Activated CD8-positive, alpha-beta T cell treated with anti-CD3 and anti-CD28 coated beads for 36 hours (primary cell): ENCODE measurements at regions of chr4 and their contacts with region 1.

Region 1: DNA sequence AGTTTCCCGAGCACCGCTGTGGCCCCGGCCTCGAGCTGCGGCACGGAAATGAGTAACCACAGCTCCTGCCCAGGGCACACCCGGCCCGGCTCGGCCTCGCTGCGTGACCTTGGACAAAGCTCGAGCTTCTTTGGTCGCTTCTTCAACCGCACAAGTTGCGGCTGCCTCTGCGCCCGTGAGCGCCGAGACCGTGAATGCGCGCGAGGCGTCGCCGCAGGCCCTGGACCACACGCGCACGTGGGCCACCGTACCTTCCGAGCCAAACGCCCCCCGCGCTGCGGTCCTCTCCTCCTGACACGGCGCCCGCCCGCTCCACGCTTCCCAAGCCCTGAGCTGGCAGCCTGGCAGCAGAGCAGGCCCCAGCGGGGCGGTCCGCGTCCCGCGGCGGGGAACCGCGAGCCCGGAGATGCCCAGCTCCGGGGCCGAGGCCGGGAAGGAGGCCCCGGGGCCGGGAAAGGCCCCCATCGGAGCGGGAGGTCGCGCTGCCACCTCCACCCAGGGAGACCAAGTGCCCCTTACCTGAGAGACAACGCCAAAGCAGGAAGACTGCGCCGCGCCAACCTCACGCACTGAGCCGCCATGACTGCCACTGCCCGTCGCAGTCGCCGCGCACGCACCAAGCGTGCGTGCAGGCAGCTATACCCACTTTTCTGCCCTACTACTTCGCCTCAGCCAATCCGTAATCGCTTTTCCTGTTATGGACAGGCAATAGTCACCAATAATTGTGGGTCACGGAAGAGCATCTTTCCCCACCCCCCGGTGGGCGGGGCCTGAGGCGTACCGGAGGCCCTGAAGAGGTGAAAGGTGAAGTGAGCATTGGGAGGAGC is at the start of gene GRPEL1:
- DNase-seq: peak; percentile 100
- ATAC-seq: peak; percentile 95
- H3K4me3 Mint-ChIP-seq: peak within 1 kb of the TSS; percentile 91
- H3K27ac Mint-ChIP-seq: peak within 1 kb of the TSS; percentile 92
- H3K4me1 Mint-ChIP-seq: peaks cover 42% of the 10 kb centered on the region
- H3K27me3 Mint-ChIP-seq: peaks cover 1% of the 10 kb centered on the region
- CTCF ChIP-seq: no peak
- total RNA-seq, gene GRPEL1: 82.4 to 84.5 TPM

Region 2: GRCh38 chr4:6716018-6716911 is 351.4 kb before region 1 on chr4 and contains the start of gene BLOC1S4:
- CTCF ChIA-PET with region 1: interaction called, 18 read pairs
- POLR2A ChIA-PET with region 1: interaction called, 10 read pairs
- intact Hi-C with region 1: loop called (anchors 5 kb)
- DNase-seq: peak; percentile 91
- ATAC-seq: peak; percentile 82
- H3K4me3 Mint-ChIP-seq: peak within 1 kb of the TSS; percentile 90
- H3K27ac Mint-ChIP-seq: peak within 1 kb of the TSS; percentile 92
- H3K4me1 Mint-ChIP-seq: peaks cover 31% of the 10 kb centered on the region
- H3K27me3 Mint-ChIP-seq: no peaks in the 10 kb centered on the region
- CTCF ChIP-seq: no peak
- total RNA-seq, gene BLOC1S4: 19.1 to 21.8 TPM

Region 3: GRCh38 chr4:6909073-6909965 is 158.3 kb before region 1 on chr4 and contains the start of gene TBC1D14:
- CTCF ChIA-PET with region 1: interaction called, 11 read pairs
- POLR2A ChIA-PET with region 1: interaction called, 4 read pairs
- intact Hi-C with region 1: no loop called
- DNase-seq: peak; percentile 88
- ATAC-seq: peak; percentile 89
- H3K4me3 Mint-ChIP-seq: peak within 1 kb of the TSS; percentile 93
- H3K27ac Mint-ChIP-seq: peak within 1 kb of the TSS; percentile 90
- H3K4me1 Mint-ChIP-seq: peaks cover 42% of the 10 kb centered on the region
- H3K27me3 Mint-ChIP-seq: no peaks in the 10 kb centered on the region
- CTCF ChIP-seq: no peak
- total RNA-seq, gene TBC1D14: 34.7 to 36.3 TPM

Region 4: GRCh38 chr4:6974138-6974848 is 93.4 kb before region 1 on chr4:
- CTCF ChIA-PET with region 1: interaction called, 33 read pairs
- POLR2A ChIA-PET with region 1: interaction called, 3 read pairs
- intact Hi-C with region 1: no loop called
- DNase-seq: peak; percentile 90
- ATAC-seq: peak; percentile 99
- H3K4me3 Mint-ChIP-seq: no peak overlapping the region
- H3K27ac Mint-ChIP-seq: no peak overlapping the region
- H3K4me1 Mint-ChIP-seq: peaks cover 9% of the 10 kb centered on the region
- H3K27me3 Mint-ChIP-seq: no peaks in the 10 kb centered on the region
- CTCF ChIP-seq: peak; percentile 94

Region 5: DNA sequence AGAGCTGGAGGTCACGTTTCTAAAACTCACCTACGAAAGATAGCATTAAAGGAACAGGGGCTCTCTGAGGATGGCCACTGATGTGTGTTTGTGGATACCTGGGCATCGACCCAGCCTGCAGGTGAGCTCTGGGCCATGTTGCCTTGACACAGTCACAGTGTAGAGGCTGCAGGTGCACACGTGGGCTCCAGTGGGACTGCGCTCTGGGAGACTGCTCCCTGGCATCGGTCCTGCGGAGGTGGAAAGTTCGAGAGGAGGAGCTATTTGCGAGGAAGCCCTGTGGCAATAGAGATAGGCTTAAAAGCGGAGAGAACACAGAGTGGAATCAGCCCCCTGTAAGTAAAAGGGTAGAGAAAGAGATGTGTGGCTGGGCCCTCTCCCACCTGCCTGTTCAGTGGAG is 36.8 kb before region 1 on chr4:
- CTCF ChIA-PET with region 1: no interaction called
- POLR2A ChIA-PET with region 1: no interaction called
- intact Hi-C with region 1: no loop called
- DNase-seq: no peak
- ATAC-seq: no peak
- H3K4me3 Mint-ChIP-seq: no peak overlapping the region
- H3K27ac Mint-ChIP-seq: no peak overlapping the region
- H3K4me1 Mint-ChIP-seq: peaks cover 5% of the 10 kb centered on the region
- H3K27me3 Mint-ChIP-seq: no peaks in the 10 kb centered on the region
- CTCF ChIP-seq: no peak

Region 6: DNA sequence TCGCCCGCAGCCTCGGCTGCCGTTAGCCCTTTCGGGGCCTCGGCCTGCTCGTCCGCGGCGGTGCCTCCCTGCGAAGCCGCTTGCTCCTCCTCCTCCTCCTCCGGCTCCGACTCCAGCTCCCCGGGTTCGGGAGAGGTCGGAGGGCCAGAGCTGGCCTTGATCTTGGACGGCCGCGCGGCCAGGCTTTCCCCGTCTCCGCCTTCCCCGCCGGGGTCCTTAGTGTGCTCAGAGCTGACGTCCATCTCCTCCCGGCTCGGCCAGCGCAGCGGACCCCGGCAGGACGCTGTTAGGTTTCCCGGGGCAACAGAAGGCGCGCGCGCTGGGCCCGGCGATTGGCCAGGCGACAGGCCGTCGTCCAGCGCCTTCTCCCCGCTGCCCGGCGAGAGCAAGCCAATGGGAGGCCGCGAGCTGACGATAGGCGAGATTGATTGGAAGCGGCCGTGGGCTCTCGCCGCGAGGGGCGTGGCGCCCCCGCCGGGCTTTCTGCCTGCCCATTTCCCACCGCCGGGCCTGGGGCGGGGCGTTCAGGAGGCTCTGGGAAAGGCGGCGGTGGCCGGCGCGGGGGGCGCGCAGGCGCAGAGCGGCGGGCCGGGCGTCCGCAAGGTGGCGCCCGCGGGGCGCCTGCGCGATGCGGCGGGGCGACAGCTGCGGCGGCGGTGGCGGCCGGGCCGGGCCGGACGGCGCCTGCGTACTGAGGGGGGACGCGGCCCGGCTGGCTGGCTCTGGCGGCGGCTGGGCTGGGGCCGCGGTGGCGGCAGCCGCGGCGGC is 24.8 kb before region 1 on chr4 and contains the start of gene TADA2B:
- CTCF ChIA-PET with region 1: interaction called, 92 read pairs
- POLR2A ChIA-PET with region 1: interaction called, 123 read pairs
- intact Hi-C with region 1: loop called (anchors 2 kb)
- DNase-seq: peak; percentile 92
- ATAC-seq: peak; percentile 91
- H3K4me3 Mint-ChIP-seq: peak within 1 kb of the TSS; percentile 87
- H3K27ac Mint-ChIP-seq: peak within 1 kb of the TSS; percentile 73
- H3K4me1 Mint-ChIP-seq: peaks cover 46% of the 10 kb centered on the region
- H3K27me3 Mint-ChIP-seq: no peaks in the 10 kb centered on the region
- CTCF ChIP-seq: peak; percentile 14
- total RNA-seq, gene TADA2B: 7.7 to 10.0 TPM

Region 7: DNA sequence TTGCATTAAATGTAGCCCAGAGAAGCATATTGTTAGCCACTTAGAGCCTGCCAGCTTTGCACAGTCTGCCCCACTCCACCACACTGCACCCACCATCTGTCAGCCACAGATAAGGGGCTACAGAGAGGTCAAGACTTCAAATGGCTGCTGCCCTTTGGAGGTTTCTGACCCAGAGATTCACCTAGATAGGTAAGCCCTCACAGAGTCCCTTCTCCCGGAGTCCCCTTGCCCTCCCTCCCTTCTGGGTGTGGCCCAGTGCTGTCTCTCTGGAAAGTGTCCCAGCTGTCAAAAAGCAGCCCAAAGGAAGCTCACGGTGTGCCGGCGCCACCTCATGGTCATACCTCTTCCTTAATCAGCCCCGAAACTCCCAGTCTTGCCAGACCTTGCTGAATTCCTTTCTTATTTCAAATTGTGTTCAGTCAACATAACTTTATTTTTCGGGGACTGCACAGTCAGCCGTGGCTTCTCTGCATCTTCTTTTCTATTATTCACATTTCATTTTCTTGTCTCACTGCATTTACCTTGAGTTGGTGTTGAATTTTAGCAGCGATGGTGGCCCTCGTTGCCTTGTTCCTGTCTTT is 14.3 kb after region 1 on chr4:
- CTCF ChIA-PET with region 1: interaction called, 18 read pairs
- POLR2A ChIA-PET with region 1: interaction called, 4 read pairs
- intact Hi-C with region 1: no loop called
- DNase-seq: peak; percentile 69
- ATAC-seq: peak; percentile 73
- H3K4me3 Mint-ChIP-seq: no peak overlapping the region
- H3K27ac Mint-ChIP-seq: no peak overlapping the region
- H3K4me1 Mint-ChIP-seq: no peaks in the 10 kb centered on the region
- H3K27me3 Mint-ChIP-seq: peaks cover 30% of the 10 kb centered on the region
- CTCF ChIP-seq: peak; percentile 55

Region 8: DNA sequence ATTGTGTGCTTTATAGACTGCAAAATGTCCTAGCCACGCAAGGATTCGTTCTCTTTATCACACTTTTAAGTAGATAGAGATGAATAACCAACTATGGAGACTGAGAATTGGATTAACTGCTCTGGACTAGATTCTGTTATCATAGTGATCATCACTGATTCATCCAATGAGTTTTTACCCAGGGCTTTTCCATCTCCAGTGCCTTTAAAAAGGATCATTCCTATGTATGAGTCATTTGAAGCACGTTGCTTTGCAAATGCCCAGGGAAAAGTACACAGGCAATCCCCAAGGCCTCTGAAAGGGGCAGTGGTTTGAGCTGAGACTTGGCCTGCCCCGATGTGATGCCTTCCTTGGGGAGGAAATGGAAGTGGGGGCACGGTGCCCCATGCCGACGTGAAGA is 489.8 kb after region 1 on chr4:
- CTCF ChIA-PET with region 1: no interaction called
- POLR2A ChIA-PET with region 1: no interaction called
- intact Hi-C with region 1: no loop called
- DNase-seq: no peak
- ATAC-seq: no peak
- H3K4me3 Mint-ChIP-seq: no peak overlapping the region
- H3K27ac Mint-ChIP-seq: no peak overlapping the region
- H3K4me1 Mint-ChIP-seq: no peaks in the 10 kb centered on the region
- H3K27me3 Mint-ChIP-seq: no peaks in the 10 kb centered on the region
- CTCF ChIP-seq: no peak